CD14-positive monocyte (primary cell): ENCODE measurements at regions of chr1 and their contacts with region 1.

Region 1: DNA sequence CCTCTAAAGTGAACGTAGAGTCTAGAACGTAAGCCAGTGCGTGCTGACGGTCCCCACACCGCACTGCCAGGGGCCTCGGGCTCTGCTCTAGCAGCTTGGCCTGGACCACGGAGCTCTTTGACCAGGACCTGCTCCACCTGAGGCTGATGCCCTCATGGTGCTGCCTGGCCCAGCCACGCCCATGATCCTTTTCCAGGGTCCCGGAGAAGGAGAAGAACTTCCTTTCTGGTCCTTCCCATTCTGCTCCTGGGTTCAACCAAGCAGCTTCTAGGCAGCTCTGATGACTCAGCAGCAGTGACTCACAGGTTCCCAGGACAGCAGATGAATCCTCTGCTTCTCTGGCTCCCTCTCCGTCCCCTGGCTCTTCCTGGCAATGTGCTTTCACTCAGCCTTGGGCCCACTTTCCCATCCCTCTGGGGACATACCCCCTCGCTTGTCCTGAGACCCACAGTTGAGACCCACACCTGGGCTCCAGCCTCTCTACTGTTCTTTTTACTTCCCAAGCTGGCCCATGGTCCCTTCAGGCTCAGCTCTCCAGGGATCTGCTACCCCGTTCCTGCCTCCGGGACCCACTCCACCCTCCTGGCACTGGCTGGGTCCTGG is 246.3 kb upstream of the RAB4A start:
- DNase-seq: peak; percentile 75 to 96 (median 94)
- H3K4me3 ChIP-seq: peak overlapping the region in 1 of 3 experiments; percentile 45
- H3K4me3 Mint-ChIP-seq: peak overlapping the region in 1 of 2 donors; percentile 36
- H3K27ac ChIP-seq: peak overlapping the region; percentile 26 to 78
- H3K27ac Mint-ChIP-seq: peak overlapping the region; percentile 87 to 93 (median 90)
- H3K4me1 ChIP-seq: peaks cover 77 to 88% of the 10 kb centered on the region in 2 donors
- H3K4me1 Mint-ChIP-seq: peaks cover 93% of the 10 kb centered on the region
- H3K27me3 ChIP-seq: no peaks in the 10 kb centered on the region
- H3K27me3 Mint-ChIP-seq: peaks cover 0 to 2% (median 0%) of the 10 kb centered on the region in 3 donors
- CTCF ChIP-seq: no peak

Region 2: GRCh38 chr1:228944935-228945371 is 79.7 kb before region 1 on chr1:
- intact Hi-C with region 1: loop called in 1 of 2 experiments (anchors 5 kb)
- DNase-seq: peak; percentile 70 to 76 (median 72)
- H3K4me3 ChIP-seq: peak overlapping the region in 1 of 3 experiments; percentile 39
- H3K4me3 Mint-ChIP-seq: no peak overlapping the region
- H3K27ac ChIP-seq: peak overlapping the region in 1 of 2 donors; percentile 70
- H3K27ac Mint-ChIP-seq: peak overlapping the region in 6 of 7 donors; percentile 54 to 85 (median 76)
- H3K4me1 ChIP-seq: peaks cover 77 to 96% of the 10 kb centered on the region in 2 donors
- H3K4me1 Mint-ChIP-seq: peaks cover 67% of the 10 kb centered on the region
- H3K27me3 ChIP-seq: no peaks in the 10 kb centered on the region
- H3K27me3 Mint-ChIP-seq: no peaks in the 10 kb centered on the region
- CTCF ChIP-seq: no peak

Region 3: GRCh38 chr1:228978481-228979324 is 45.9 kb before region 1 on chr1:
- intact Hi-C with region 1: no loop called
- DNase-seq: no peak
- H3K4me3 ChIP-seq: no peak overlapping the region
- H3K4me3 Mint-ChIP-seq: peak overlapping the region in 1 of 2 donors; percentile 52
- H3K27ac ChIP-seq: no peak overlapping the region
- H3K27ac Mint-ChIP-seq: peak overlapping the region in 1 of 7 donors; percentile 60
- H3K4me1 ChIP-seq: peaks cover 24 to 29% of the 10 kb centered on the region in 2 donors
- H3K4me1 Mint-ChIP-seq: peaks cover 36% of the 10 kb centered on the region
- H3K27me3 ChIP-seq: no peaks in the 10 kb centered on the region
- H3K27me3 Mint-ChIP-seq: peaks cover 0 to 5% (median 4%) of the 10 kb centered on the region in 3 donors
- CTCF ChIP-seq: no peak

Region 4: GRCh38 chr1:228989992-228990827 is 34.4 kb before region 1 on chr1:
- intact Hi-C with region 1: loop called in 1 of 2 experiments (anchors 5 kb)
- DNase-seq: peak; percentile 86 to 93 (median 87)
- H3K4me3 ChIP-seq: peak overlapping the region in 1 of 3 experiments; percentile 23
- H3K4me3 Mint-ChIP-seq: peak overlapping the region in 1 of 2 donors; percentile 39
- H3K27ac ChIP-seq: peak overlapping the region; percentile 91 to 92
- H3K27ac Mint-ChIP-seq: peak overlapping the region; percentile 92 to 98 (median 96)
- H3K4me1 ChIP-seq: peaks cover 86 to 96% of the 10 kb centered on the region in 2 donors
- H3K4me1 Mint-ChIP-seq: peaks cover 93% of the 10 kb centered on the region
- H3K27me3 ChIP-seq: no peaks in the 10 kb centered on the region
- H3K27me3 Mint-ChIP-seq: no peaks in the 10 kb centered on the region
- CTCF ChIP-seq: no peak

Region 5: DNA sequence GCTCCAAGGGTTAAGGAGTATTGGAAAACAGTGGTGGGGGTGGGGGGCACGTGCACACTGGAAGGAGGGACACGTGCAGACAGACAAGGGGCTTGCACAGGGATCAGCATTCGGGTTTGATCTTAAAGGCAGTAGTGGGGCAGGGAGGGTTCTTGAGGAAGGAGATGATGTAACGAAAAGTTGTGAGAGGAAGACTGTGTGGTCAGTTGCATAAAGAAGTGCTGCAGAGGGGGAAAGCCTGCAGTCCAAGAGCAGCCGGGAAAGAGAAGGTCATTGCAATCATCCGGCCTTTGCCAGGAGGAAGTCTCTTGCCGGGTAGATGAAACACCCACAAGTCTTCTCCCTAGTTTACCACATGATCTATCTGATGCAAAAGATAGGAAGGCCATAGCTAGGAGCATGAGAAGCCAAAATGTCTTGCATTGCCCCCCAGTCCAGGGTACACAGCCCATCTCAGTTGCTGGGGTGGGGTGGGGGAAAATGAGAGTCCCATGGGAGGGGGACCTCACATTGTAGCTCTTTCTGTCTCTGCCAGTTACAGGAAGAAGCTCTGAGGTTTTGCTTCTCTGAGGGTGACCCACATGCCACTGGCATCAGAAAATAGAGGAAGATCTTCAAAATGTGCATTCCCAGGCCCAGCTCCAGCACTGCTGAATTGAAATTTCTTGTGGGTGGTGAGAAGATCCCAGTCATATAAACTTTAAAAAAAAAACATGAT is 43.8 kb after region 1 on chr1:
- intact Hi-C with region 1: loop called (anchors 5 kb)
- DNase-seq: peak; percentile 87 to 96 (median 92)
- H3K4me3 ChIP-seq: peak overlapping the region in 1 of 3 experiments; percentile 48
- H3K4me3 Mint-ChIP-seq: peak overlapping the region; percentile 47 to 67
- H3K27ac ChIP-seq: peak overlapping the region; percentile 76 to 82
- H3K27ac Mint-ChIP-seq: peak overlapping the region; percentile 91 to 96 (median 94)
- H3K4me1 ChIP-seq: peaks cover 78 to 88% of the 10 kb centered on the region in 2 donors
- H3K4me1 Mint-ChIP-seq: peaks cover 88% of the 10 kb centered on the region
- H3K27me3 ChIP-seq: no peaks in the 10 kb centered on the region
- H3K27me3 Mint-ChIP-seq: peaks cover 0 to 2% (median 0%) of the 10 kb centered on the region in 3 donors
- CTCF ChIP-seq: no peak

Region 6: GRCh38 chr1:229156872-229157271 is 132.2 kb after region 1 on chr1:
- intact Hi-C with region 1: loop called (anchors 2 to 10 kb)
- DNase-seq: peak in 2 of 3 donors; percentile 18 to 34
- H3K4me3 ChIP-seq: no peak overlapping the region
- H3K4me3 Mint-ChIP-seq: no peak overlapping the region
- H3K27ac ChIP-seq: peak overlapping the region; percentile 85 to 95
- H3K27ac Mint-ChIP-seq: peak overlapping the region; percentile 51 to 97 (median 95)
- H3K4me1 ChIP-seq: peaks cover 68 to 76% of the 10 kb centered on the region in 2 donors
- H3K4me1 Mint-ChIP-seq: peaks cover 72% of the 10 kb centered on the region
- H3K27me3 ChIP-seq: no peaks in the 10 kb centered on the region
- H3K27me3 Mint-ChIP-seq: peaks cover 0 to 4% (median 2%) of the 10 kb centered on the region in 3 donors
- CTCF ChIP-seq: peak; percentile 53